CD8-positive, alpha-beta T cell (primary cell): ENCODE measurements at regions of chr5 and their contacts with region 1.

Region 1: GRCh38 chr5:181181650-181182565 is 23.1 kb downstream of the TRIM7 start:
- DNase-seq: peak in 8 of 9 experiments; percentile 49 to 88 (median 73)
- ATAC-seq: peak; percentile 77
- H3K4me3 ChIP-seq: no peak overlapping the region
- H3K4me3 Mint-ChIP-seq: peak overlapping the region; percentile 83
- H3K27ac ChIP-seq: peak overlapping the region in 1 of 2 experiments; percentile 55
- H3K27ac Mint-ChIP-seq: peak overlapping the region; percentile 76
- H3K4me1 ChIP-seq: peaks cover 13% of the 10 kb centered on the region
- H3K4me1 Mint-ChIP-seq: peaks cover 31% of the 10 kb centered on the region
- H3K27me3 ChIP-seq: no peaks in the 10 kb centered on the region
- H3K27me3 Mint-ChIP-seq: peaks cover 2% of the 10 kb centered on the region
- CTCF ChIP-seq: peak; percentile 79

Region 2: DNA sequence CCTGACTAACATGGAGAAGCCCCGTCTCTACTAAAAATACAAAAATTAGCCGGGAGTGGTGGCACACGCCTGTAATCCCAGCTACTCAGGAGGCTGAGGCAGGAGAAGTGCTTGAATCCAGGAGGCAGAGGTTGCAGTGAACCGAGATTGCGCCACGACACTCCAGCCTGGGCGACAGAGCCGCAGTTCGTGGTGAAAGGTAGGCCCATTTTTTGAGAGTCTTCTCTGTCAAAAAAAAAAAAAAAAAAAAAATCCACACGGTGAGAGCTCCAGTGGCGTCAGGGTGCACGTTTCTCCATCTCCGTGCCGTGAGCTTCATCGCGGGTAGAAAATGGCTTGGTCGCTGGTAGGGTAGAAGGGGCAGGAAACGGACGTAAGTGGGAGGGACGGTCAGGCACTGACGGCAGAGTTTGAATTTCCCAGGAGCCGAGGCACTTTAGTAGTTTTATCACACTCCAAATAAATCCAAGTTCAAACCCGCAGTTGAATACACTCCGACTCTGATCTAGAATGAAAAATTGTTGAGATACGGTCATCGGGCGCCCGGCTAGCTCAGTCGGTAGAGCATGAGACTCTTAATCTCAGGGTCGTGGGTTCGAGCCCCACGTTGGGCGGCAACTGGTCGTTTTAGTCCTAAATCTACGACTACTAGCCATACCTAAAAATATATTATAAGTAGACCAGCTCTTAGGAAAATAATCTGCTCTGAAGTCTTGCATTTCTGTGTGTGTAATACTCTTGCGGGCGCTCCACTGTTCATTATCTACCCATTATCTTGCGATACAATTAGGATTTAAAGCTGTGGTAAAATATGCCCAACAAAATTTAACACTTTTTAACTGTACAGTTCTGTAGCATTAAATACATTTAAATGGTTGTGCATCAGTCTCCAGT is 25.6 kb after region 1 on chr5:
- CTCF ChIA-PET with region 1: interaction called, 40 read pairs
- POLR2A ChIA-PET with region 1: interaction called, 158 read pairs
- intact Hi-C with region 1: no loop called
- DNase-seq: peak in 8 of 9 experiments; percentile 46 to 92 (median 78)
- ATAC-seq: peak; percentile 69
- H3K4me3 ChIP-seq: peak overlapping the region; percentile 57 to 71
- H3K4me3 Mint-ChIP-seq: peak overlapping the region; percentile 88
- H3K27ac ChIP-seq: peak overlapping the region; percentile 59 to 64
- H3K27ac Mint-ChIP-seq: peak overlapping the region; percentile 85
- H3K4me1 ChIP-seq: peaks cover 29% of the 10 kb centered on the region
- H3K4me1 Mint-ChIP-seq: peaks cover 30% of the 10 kb centered on the region
- H3K27me3 ChIP-seq: no peaks in the 10 kb centered on the region
- H3K27me3 Mint-ChIP-seq: peaks cover 14% of the 10 kb centered on the region
- CTCF ChIP-seq: no peak